ENCODE measurements at regions of chr1 and their contacts with region 1.

Region 1: DNA sequence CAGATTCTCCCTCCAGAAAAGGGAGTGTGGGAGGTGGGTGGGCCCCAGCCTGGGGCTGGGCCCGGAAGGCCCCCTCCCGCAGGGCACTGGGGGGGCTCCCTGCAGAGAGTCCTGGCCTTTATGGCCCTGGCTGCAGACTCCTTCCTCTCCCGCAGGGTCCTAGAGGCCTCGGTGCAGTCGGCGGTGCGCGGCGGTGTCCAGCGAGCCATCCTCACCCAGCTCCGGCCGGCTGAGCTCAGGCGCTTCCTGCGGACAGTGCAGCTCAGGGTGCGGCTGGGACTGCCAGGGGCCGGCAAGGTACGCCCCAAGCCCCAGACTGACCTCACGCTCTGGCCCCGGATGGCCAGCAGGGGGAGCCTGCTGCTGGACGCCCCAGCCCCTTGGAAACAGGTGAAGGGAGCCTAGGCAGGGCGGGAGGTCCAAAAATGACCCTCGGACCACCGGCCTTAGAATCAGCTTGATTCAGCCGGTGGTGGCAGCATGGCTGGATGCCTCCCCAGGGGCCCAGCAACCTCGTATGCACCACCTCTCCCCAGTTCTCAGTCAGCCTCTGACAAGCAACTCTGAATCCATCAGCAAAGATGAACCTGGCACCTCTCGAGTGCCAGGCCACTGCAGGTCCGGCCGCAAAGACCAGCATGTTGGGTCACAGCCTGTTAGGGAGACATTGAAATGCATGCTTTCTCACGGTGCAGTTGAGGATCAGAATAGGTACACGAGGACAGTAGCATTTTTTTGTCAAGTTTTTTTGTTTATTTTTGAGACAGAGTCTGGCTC is 20.6 kb downstream of the MTHFR start:
- DNase-seq: peak; percentile 62
- H3K4me3 ChIP-seq: peak overlapping the region in 1 of 3 experiments; percentile 5
- H3K27ac ChIP-seq: no peak overlapping the region
- H3K4me1 ChIP-seq: peaks cover 8% of the 10 kb centered on the region
- H3K27me3 ChIP-seq: no peaks in the 10 kb centered on the region
- CTCF ChIP-seq: peak; percentile 95
- POLR2A ChIP-seq: no peak

Region 2: DNA sequence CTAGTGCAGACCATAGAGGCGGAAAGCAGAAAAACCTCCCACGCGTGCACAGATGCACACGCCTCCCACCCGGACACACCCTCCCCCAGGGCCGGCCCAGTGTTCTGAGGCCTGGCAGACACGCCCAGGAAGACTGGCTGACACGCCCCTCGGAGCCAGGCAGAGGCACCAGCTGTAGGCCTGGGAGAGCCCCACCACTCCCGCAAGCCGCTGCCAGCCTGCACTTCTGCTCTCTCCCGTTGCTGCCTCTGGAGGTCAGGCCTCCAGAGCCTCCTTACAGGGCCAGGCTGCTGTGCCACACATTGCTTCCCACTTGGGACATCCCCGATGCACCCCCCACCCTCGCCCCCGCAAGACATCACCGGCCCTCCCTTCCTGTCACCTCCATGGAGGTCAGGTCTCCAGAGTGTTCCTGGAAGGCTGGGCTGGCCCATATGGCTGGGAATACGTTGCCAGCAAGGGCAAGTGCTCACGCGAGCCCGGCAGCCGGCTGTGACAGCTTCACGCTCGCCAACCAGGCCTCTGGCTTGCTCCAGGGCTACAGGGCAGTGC is 1029.1 kb before region 1 on chr1:
- CTCF ChIA-PET with region 1: no interaction called
- POLR2A ChIA-PET with region 1: no interaction called
- dilution Hi-C with region 1: no loop called
- intact Hi-C with region 1: no loop called
- DNase-seq: peak; percentile 11
- H3K4me3 ChIP-seq: no peak overlapping the region
- H3K27ac ChIP-seq: no peak overlapping the region
- H3K4me1 ChIP-seq: no peaks in the 10 kb centered on the region
- H3K27me3 ChIP-seq: peaks cover 0 to 2% of the 10 kb centered on the region in 2 experiments
- CTCF ChIP-seq: no peak
- POLR2A ChIP-seq: no peak

Region 3: DNA sequence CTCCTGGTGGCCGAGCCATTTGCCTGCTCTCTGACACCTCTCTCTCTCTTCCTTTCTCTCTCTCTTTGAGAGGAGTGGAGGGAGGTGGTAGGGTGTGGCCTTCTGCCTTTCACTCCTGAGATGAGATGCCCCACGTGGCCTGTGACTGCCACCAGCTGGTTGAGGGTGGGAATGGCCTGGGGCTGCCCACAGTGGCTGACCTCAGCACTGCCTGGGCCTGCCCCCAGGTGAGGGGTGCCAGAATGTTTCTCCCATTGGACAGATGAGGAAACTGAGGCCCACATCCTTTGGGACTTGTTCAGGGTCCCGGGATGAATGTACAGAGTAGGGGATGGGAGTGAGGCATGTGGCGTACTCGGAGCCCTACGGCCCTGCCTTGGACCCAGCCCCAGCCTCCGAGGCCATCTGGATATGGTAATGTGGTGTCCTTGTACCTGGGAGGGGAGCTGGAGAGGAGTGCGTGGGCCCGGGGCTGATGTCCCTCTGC is 35.9 kb before region 1 on chr1:
- CTCF ChIA-PET with region 1: no interaction called
- POLR2A ChIA-PET with region 1: no interaction called
- dilution Hi-C with region 1: no loop called
- intact Hi-C with region 1: loop called (anchors 1 kb)
- DNase-seq: peak; percentile 17
- H3K4me3 ChIP-seq: no peak overlapping the region
- H3K27ac ChIP-seq: no peak overlapping the region
- H3K4me1 ChIP-seq: no peaks in the 10 kb centered on the region
- H3K27me3 ChIP-seq: no peaks in the 10 kb centered on the region
- CTCF ChIP-seq: peak; percentile 52 to 56
- POLR2A ChIP-seq: no peak

Region 4: DNA sequence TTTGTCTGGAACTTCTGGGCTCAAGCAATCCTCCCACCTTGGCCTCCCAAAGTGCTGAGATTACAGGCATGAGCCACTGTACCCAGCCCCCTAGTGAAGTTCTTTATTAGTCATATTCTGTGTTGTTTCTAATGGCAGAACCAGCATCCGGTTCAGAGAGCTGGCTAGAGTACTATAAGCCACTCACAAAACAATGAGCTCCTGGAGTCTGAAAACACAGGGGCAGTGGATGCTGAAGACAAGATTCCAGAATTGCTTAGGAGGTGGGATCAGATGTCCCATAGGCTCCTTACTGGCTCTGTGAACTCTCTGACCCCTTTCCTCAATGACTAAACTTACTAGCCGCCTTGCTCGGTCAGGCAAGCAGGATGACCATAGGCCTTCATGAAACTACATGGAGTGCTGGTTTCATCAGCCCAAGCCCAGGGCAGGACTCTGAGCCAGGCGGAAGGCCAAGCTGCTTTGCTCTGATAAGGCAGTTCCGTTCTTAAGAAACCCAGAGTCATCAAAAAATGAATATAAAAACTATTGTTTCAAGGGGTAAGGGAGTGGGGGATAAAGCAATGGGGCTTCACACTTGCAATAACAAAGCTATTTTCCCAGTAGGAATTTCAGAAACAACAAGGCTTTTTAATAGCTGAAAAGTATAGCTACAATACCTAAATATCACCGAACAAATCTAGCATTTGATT is 12.5 kb after region 1 on chr1:
- CTCF ChIA-PET with region 1: interaction called, 31 read pairs
- POLR2A ChIA-PET with region 1: interaction called, 5 read pairs
- dilution Hi-C with region 1: no loop called
- intact Hi-C with region 1: no loop called
- DNase-seq: peak; percentile 99
- H3K4me3 ChIP-seq: peak overlapping the region in 1 of 3 experiments; percentile 12
- H3K27ac ChIP-seq: peak overlapping the region; percentile 96
- H3K4me1 ChIP-seq: peaks cover 33% of the 10 kb centered on the region
- H3K27me3 ChIP-seq: no peaks in the 10 kb centered on the region
- CTCF ChIP-seq: no peak
- POLR2A ChIP-seq: no peak

Region 5: DNA sequence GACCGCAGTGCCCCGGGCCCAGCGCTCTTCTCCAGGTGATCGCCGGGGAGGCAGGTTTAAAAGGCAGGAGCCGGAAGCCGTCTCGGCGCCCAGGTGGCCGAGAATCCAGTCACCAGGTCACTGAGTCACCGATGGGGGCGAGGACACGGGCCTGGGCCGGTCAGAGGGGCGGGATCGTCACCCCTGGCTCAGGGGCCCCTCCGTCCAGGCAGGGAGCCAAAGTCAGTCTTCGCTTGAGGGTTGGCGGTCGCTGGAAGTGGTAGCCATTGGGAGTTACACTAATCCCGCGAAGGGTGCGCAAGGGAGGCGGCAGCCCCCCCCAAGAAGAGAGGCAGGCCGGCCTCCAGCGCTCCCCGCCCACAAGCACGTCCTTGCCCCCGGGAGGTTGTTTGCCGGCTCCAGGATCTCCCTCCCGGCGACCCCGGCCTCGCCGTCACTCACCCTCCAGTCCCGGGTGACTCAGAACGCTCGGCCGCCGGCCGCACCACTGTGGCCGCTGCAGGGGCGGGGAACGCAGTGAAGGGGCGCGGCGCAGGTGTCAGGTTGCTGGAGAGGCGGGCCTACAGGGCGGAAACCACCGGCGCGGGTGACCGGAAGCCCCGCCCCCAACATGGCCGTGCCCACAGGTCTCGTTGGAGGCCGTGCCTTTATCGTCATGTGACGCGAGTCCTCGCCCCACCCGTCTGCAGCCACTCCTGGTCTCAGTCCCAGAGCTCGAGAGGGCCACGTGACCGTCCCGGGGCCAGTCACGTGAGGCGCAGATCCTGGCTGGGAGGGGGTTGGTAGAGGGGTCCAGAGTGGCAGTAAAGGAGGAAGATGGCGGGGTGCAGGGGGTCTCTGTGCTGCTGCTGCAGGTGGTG is 20.5 kb after region 1 on chr1 and contains the starts of genes CLCN6 and MTHFR:
- CTCF ChIA-PET with region 1: interaction called, 20 read pairs
- POLR2A ChIA-PET with region 1: interaction called, 3 read pairs
- dilution Hi-C with region 1: no loop called
- intact Hi-C with region 1: loop called (anchors 1 kb)
- DNase-seq: peak; percentile 100
- H3K4me3 ChIP-seq: peak within 1 kb of the TSS; percentile 75 to 97 (median 93)
- H3K27ac ChIP-seq: peak within 1 kb of the TSS; percentile 85
- H3K4me1 ChIP-seq: peaks cover 51% of the 10 kb centered on the region
- H3K27me3 ChIP-seq: no peaks in the 10 kb centered on the region
- CTCF ChIP-seq: no peak
- POLR2A ChIP-seq: peak; percentile 58
- total RNA-seq, gene CLCN6: 41.2 and 43.3 TPM in 2 replicates
- total RNA-seq, gene MTHFR: 25.3 and 26.5 TPM in 2 replicates

Region 6: DNA sequence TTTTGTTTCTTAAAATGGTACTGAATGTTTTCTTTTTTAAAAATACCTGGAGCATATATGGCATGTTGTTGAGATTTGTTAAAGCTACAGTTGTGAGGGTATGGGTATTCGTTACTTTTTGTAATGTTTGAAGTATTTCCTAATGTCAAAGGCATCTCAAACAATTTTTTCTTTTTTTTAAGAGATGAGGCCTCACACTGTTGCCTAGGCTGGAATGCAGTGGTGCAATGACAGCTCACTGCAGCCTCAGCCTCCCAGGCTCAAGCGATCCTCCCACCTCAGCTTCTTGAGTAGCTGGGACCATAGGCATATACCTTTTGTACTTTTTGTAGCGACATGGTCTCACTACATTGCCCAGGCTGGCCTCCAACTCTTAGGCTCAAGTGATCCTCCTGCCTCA is 36.9 kb after region 1 on chr1:
- CTCF ChIA-PET with region 1: no interaction called
- POLR2A ChIA-PET with region 1: no interaction called
- dilution Hi-C with region 1: no loop called
- intact Hi-C with region 1: loop called (anchors 1 kb)
- DNase-seq: no peak
- H3K4me3 ChIP-seq: no peak overlapping the region
- H3K27ac ChIP-seq: peak overlapping the region; percentile 79
- H3K4me1 ChIP-seq: peaks cover 17% of the 10 kb centered on the region
- H3K27me3 ChIP-seq: no peaks in the 10 kb centered on the region
- CTCF ChIP-seq: no peak
- POLR2A ChIP-seq: no peak

Region 7: GRCh38 chr1:11842154-11843041 is 57.2 kb after region 1 on chr1:
- CTCF ChIA-PET with region 1: no interaction called
- POLR2A ChIA-PET with region 1: no interaction called
- dilution Hi-C with region 1: no loop called
- intact Hi-C with region 1: no loop called
- DNase-seq: peak; percentile 94
- H3K4me3 ChIP-seq: no peak overlapping the region
- H3K27ac ChIP-seq: no peak overlapping the region
- H3K4me1 ChIP-seq: peaks cover 7% of the 10 kb centered on the region
- H3K27me3 ChIP-seq: no peaks in the 10 kb centered on the region
- CTCF ChIP-seq: no peak
- POLR2A ChIP-seq: no peak